Astrocyte of the cerebellum (primary cell): ENCODE measurements at regions of chr4 and their contacts with region 1.

Region 1: DNA sequence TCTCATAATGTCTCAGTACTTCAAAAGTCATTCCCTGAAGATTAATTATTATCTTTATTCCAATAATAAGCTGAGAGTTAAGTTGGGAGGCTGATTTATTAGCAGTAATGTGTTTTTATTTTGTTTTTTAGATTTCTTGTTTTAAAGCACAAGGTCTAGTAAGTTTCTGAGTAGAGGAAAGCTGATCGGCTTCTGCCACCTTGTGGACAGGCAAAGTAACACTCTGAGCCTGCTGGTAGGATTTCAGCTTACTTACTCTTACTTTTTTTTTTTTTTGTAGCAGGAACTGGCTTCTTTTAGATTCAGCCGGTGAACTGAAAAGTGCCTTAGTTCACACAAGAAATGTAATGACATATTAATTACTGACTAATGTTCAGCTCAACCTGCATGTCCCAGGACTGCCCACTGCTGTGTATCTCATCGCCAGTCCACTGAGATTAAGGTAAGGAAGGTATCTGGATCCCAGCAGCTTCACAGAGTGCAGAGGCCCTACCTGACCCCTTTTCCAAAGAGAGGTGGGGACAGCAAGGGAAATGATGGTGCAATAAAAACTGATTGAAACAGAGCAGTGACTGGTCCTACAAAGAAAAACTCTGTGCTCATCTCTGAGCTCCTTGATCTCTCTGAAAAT is 126.5 kb downstream of the ADGRA3 start:
- DNase-seq: peak; percentile 72
- H3K4me3 ChIP-seq: no peak overlapping the region
- CTCF ChIP-seq: peak; percentile 80

Region 2: GRCh38 chr4:21802406-21802805 is 586.9 kb before region 1 on chr4:
- in situ Hi-C with region 1: loop called (anchors 25 kb)
- DNase-seq: peak; percentile 40
- H3K4me3 ChIP-seq: no peak overlapping the region
- CTCF ChIP-seq: no peak

Region 3: DNA sequence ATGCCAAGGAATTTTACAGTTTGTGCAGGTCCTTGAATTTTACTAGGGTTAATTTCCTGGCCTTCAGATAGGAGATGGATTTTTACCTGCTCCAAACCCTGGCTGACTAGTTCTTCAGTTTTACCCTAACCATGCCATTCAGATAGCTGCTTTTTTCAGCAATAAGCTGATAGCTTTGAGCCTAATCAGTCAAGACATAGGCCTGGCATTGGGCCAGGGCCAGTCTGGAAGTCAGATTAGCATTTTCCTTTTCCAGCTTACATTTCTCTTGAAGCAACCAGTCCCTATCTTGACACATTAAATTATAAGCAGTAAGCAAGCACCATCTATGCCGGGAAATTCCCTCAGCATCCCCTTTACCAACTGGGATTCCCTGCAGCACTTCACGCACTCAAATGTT is 50.6 kb before region 1 on chr4:
- in situ Hi-C with region 1: no loop called
- DNase-seq: no peak
- H3K4me3 ChIP-seq: no peak overlapping the region
- CTCF ChIP-seq: no peak